ENCODE measurements at regions of chr21 and their contacts with region 1.

Region 1: GRCh38 chr21:24514081-24514733 is 1093.1 kb downstream of the MRPL39 start:
- DNase-seq: no peak
- ATAC-seq: no peak
- H3K4me3 Mint-ChIP-seq: no peak overlapping the region
- H3K27ac Mint-ChIP-seq: no peak overlapping the region
- H3K4me1 Mint-ChIP-seq: no peaks in the 10 kb centered on the region
- H3K27me3 Mint-ChIP-seq: no peaks in the 10 kb centered on the region

Region 2: GRCh38 chr21:23853796-23854379 is 660.3 kb before region 1 on chr21:
- CTCF ChIA-PET with region 1: no interaction called
- POLR2A ChIA-PET with region 1: no interaction called
- intact Hi-C with region 1: loop called (anchors 2 to 10 kb)
- DNase-seq: no peak
- ATAC-seq: peak; percentile 61
- H3K4me3 Mint-ChIP-seq: no peak overlapping the region
- H3K27ac Mint-ChIP-seq: no peak overlapping the region
- H3K4me1 Mint-ChIP-seq: peaks cover 2% of the 10 kb centered on the region
- H3K27me3 Mint-ChIP-seq: no peaks in the 10 kb centered on the region

Region 3: GRCh38 chr21:24375201-24375600 is 139.0 kb before region 1 on chr21:
- CTCF ChIA-PET with region 1: no interaction called
- POLR2A ChIA-PET with region 1: no interaction called
- intact Hi-C with region 1: loop called in 1 of 2 experiments (anchors 2 kb)
- DNase-seq: peak; percentile 49
- ATAC-seq: peak; percentile 36
- H3K4me3 Mint-ChIP-seq: no peak overlapping the region
- H3K27ac Mint-ChIP-seq: no peak overlapping the region
- H3K4me1 Mint-ChIP-seq: no peaks in the 10 kb centered on the region
- H3K27me3 Mint-ChIP-seq: no peaks in the 10 kb centered on the region